AG04450 (cell line): ENCODE measurements at regions of chr7 and their contacts with region 1.

Region 1: GRCh38 chr7:94374231-94374630 is 20.5 kb upstream of the COL1A2 start:
- DNase-seq: peak; percentile 87
- H3K4me3 ChIP-seq: peak overlapping the region; percentile 50
- H3K27ac ChIP-seq: peak overlapping the region; percentile 93
- H3K27me3 ChIP-seq: no peaks in the 10 kb centered on the region
- CTCF ChIP-seq: peak; percentile 14; the same call in 1 of the 2 replicates

Region 2: DNA sequence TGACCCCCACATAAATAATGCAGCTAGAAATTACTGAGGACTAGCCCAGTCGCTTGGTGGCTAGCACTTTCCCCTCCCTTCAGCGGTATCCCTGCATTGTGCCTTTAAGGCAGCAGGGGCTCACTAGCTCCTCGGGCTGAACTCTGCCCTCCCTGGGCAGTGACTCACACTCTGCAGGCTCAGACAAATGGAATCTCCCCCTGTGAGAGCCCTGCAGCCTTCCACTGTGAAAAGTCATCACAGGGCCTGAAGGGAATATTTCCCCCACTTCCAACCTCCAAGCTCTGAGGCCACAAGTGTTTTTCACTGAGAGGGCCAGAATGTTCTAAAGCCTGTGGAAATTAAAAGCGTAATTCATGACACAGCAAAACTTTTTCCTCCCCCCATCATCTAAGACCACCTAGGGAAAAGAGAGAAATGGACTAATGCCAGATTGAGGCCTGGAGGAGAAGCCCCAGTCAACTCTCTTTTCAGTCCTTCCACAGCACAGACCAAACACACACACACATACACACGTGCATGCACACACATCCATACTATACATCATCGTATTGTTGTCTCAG is 73.1 kb before region 1 on chr7:
- CTCF ChIA-PET with region 1: interaction called, 32 read pairs
- POLR2A ChIA-PET with region 1: interaction called, 165 read pairs
- DNase-seq: peak; percentile 94
- H3K4me3 ChIP-seq: peak overlapping the region; percentile 44
- H3K27ac ChIP-seq: peak overlapping the region; percentile 98
- H3K27me3 ChIP-seq: no peaks in the 10 kb centered on the region
- CTCF ChIP-seq: peak; percentile 40

Region 3: DNA sequence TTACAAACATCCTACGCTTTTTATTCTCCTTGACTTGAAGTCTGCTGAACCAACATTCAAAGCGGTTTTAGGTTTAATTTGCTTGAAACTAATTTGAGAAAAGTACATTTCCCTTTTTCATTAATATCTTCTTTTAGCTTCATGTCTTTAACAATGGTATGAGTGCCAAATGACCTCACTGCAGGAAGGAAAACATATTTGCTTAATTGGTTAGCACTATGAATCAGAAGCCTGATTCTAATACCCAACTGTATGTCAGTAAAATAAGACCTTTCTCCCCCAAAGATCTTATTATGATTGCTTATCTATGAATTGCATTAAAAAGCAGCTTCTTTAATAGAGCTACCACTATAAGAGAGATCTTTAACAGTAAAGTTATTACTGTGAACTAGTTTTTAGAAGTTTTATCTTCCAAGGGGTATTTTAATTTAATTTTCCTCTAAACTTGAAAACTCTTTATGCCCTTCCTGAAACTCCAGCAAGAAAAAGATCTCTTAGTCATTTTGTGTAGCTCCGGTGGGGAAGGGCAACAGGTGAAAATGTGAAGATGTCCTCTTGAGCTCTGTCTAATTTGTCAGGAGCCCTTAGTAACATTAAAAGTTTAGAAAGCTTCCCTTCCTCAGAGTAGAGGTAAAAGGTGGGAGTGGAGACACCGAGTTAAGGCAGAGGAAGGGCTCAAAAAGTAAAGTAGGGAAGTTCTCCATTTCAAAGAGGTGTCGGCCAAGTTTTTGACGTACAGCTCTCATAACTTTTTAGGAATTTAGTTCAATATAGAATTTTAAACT is 26.6 kb after region 1 on chr7:
- CTCF ChIA-PET with region 1: interaction called, 17 read pairs
- POLR2A ChIA-PET with region 1: interaction called, 136 read pairs
- DNase-seq: no peak
- H3K4me3 ChIP-seq: peak overlapping the region; percentile 96
- H3K27ac ChIP-seq: peak overlapping the region; percentile 66
- H3K27me3 ChIP-seq: no peaks in the 10 kb centered on the region
- CTCF ChIP-seq: no peak

Region 4: GRCh38 chr7:94848531-94848930 is 474.3 kb after region 1 on chr7:
- CTCF ChIA-PET with region 1: no interaction called
- POLR2A ChIA-PET with region 1: no interaction called
- DNase-seq: no peak
- H3K4me3 ChIP-seq: no peak overlapping the region
- H3K27ac ChIP-seq: no peak overlapping the region
- H3K27me3 ChIP-seq: no peaks in the 10 kb centered on the region
- CTCF ChIP-seq: no peak